Gastrocnemius medialis (tissue), 4 donors: ENCODE measurements at regions of chr1 and their contacts with region 1.

Region 1: GRCh38 chr1:6199298-6200187 is at the start of gene RPL22:
- DNase-seq: peak; percentile 97 to 98
- ATAC-seq: peak; percentile 98 to 100
- H3K4me3 ChIP-seq: peak within 1 kb of the TSS; percentile 78 to 96 (median 91)
- H3K27ac ChIP-seq: peak within 1 kb of the TSS; percentile 82 to 84 (median 83)
- H3K4me1 ChIP-seq: peaks cover 13 to 21% of the 10 kb centered on the region in 2 donors
- H3K27me3 ChIP-seq: no peaks in the 10 kb centered on the region
- CTCF ChIP-seq: peak in 1 of 5 experiments; percentile 12
- POLR2A ChIP-seq: peak; percentile 64 to 69
- total RNA-seq, gene RPL22: 95.2 to 132 (median 121) TPM

Region 2: DNA sequence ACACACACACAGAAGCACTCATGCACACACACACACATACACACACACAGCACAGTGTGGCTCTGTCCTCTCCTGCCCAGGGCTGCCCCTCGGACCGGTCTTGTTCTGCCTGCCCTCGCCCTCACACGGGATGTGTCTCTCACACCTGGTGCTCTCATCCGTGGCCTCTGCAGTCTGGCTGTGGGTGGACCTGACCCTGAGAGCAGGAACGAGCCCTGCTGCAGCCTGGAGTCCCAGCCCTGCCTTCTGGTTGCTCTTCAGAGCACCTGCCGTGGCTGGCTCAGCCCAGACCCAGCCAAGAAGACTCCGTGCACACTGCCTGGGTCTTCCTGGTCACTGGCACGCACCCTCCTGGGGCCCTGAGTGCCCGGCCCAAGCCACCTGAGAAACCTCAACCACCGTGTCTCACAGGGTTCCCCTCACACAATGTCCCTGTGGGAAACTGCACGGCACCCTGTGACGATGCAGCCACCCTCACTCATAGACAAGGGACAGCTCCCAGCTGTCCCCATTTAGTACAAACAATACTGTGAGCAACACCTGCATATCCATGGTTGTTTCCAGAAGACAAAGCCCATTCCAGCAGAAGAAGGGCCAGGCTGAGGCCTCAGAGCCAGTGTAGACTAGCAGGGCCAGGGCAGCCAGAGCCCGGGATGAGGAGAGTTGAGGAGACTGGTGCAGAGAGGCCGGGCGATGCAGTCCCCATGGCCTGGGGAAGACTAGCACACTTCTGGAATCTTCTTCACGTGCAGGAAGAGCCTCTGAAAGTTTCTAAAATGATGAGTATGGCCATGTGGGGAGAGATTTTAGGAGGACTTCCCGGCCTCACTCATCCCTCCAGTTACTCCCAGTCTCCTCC is 441.3 kb before region 1 on chr1:
- in situ Hi-C with region 1: no loop called
- intact Hi-C with region 1: no loop called
- DNase-seq: no peak
- ATAC-seq: no peak
- H3K4me3 ChIP-seq: no peak overlapping the region
- H3K27ac ChIP-seq: no peak overlapping the region
- H3K4me1 ChIP-seq: no peaks in the 10 kb centered on the region
- H3K27me3 ChIP-seq: no peaks in the 10 kb centered on the region
- CTCF ChIP-seq: no peak
- POLR2A ChIP-seq: no peak

Region 3: DNA sequence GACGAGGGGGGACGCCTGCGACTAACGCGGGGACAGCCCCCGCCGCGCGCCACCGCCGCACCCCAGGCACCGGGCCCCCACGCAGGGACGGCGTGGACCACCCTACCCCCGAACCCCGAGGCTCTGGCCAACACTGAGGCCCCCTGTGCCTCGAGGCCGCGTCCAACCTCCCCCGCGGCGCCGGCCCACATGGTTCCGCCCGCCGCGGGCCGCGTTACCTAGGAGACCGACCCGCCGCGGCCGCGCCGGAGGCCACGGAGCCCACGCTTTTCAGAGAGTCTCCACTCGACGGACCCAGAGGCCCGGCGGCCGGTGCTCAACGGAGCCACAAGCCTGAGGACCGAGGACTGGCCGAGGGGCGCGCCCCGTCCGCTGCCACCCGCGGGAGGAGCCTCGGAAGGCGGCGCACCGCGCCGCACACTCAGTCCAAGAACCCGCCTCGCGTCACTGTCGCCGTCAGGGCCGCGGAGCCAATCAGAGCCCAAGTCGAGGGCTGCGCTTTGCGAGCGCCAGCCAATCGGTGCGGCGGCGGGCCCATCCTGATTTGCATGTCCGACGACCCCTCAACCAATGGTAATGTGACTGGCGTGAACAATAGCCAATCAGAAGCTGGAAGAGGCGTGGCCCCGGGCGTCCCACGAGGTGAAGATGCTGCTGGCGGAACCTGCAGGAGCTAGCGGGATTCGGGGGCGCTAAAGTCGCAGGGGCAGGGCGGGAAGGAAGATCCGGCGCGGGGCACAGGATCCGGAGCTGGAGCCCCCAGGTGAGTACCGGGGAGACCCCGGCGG is 207.3 kb before region 1 on chr1 and contains the start of gene NPHP4:
- in situ Hi-C with region 1: no loop called
- intact Hi-C with region 1: loop called (anchors 1 kb)
- DNase-seq: peak; percentile 99
- ATAC-seq: peak; percentile 97 to 98
- H3K4me3 ChIP-seq: peak within 1 kb of the TSS; percentile 68 to 88 (median 72)
- H3K27ac ChIP-seq: peak within 1 kb of the TSS; percentile 71 to 93 (median 80)
- H3K4me1 ChIP-seq: peaks cover 4 to 15% of the 10 kb centered on the region in 2 donors
- H3K27me3 ChIP-seq: peaks cover 0 to 7% (median 5%) of the 10 kb centered on the region in 3 donors
- CTCF ChIP-seq: peak in 2 of 5 experiments; percentile 10 to 21
- POLR2A ChIP-seq: peak; percentile 54 to 66
- total RNA-seq, gene NPHP4: 1.1 to 10.4 (median 1.8) TPM

Region 4: DNA sequence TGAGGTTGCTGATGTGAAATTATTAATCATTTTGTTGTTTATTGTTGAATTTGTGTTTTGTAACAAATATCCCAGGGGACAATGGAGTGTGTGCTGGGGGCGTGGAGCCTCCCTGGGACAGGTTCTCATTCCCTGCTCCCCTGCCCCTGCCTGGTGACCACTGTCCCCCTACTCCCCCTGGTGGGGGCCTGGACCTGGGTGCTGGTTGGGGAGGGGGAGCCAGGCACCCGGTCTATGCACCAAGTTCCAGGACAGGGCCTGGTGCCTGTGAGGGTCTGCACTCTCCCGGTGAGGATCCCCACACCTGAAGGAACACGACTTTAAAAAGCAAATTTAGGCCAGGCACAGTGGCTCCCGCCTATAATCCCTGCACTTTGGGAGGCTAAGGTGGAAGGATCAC is 61.8 kb before region 1 on chr1:
- in situ Hi-C with region 1: no loop called
- intact Hi-C with region 1: no loop called
- DNase-seq: no peak
- ATAC-seq: no peak
- H3K4me3 ChIP-seq: no peak overlapping the region
- H3K27ac ChIP-seq: no peak overlapping the region
- H3K4me1 ChIP-seq: no peaks in the 10 kb centered on the region
- H3K27me3 ChIP-seq: no peaks in the 10 kb centered on the region
- CTCF ChIP-seq: no peak
- POLR2A ChIP-seq: no peak

Region 5: GRCh38 chr1:6235296-6235677 is 35.7 kb after region 1 on chr1:
- in situ Hi-C with region 1: no loop called
- intact Hi-C with region 1: loop called (anchors 2 kb)
- DNase-seq: no peak
- ATAC-seq: peak in 1 of 2 donors; percentile 15
- H3K4me3 ChIP-seq: peak overlapping the region; percentile 58 to 64 (median 64)
- H3K27ac ChIP-seq: peak overlapping the region; percentile 67 to 81 (median 74)
- H3K4me1 ChIP-seq: peaks cover 12% of the 10 kb centered on the region in 2 donors
- H3K27me3 ChIP-seq: peaks cover under 1 to 9% (median 6%) of the 10 kb centered on the region in 3 donors
- CTCF ChIP-seq: no peak
- POLR2A ChIP-seq: no peak

Region 6: DNA sequence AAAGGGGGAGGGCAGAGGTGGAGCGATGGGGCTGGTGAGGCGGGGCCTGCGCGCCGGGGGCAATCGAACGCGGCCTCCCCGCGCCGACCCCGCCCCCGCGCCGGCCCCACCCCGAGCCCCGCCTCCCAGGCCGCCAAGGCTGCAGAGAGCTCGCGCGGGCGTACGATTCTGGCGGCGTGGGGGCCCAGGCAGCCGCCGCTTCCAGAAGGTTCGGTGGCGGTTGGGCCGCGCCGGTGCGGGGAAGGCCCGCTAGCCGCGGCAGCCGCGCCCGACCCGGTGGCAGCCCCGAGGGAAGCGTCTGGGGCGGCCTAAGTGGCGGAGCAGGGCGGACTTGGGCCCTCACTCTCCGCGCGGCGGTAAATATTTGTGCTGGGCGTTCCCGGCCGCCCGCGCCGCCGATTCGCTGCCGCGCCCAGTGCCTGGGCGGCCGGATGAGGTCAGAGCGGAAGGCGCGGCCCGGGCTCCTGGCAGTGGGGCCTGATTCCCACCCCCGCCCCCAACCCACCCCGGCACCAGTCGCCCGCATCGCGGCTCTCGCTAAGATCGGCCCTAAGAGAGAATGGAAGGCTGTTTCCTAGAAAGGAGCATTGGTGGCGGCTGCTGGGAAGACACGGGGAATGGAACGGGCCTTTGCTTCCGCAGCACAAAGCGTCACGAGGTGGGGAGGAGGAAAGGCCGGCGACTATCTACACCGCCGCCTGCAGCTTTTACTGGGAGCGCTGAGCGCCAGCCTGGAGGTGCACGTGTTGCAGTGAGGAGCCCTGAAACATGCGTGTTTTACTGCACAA is 194.1 kb after region 1 on chr1 and contains the start of gene ACOT7:
- in situ Hi-C with region 1: no loop called
- intact Hi-C with region 1: loop called (anchors 1 kb)
- DNase-seq: peak; percentile 71 to 77
- ATAC-seq: peak; percentile 97
- H3K4me3 ChIP-seq: peak within 1 kb of the TSS; percentile 61 to 82 (median 66)
- H3K27ac ChIP-seq: peak within 1 kb of the TSS; percentile 87 to 98 (median 94)
- H3K4me1 ChIP-seq: peaks cover 7 to 8% of the 10 kb centered on the region in 2 donors
- H3K27me3 ChIP-seq: no peaks in the 10 kb centered on the region
- CTCF ChIP-seq: peak in 1 of 5 experiments; percentile 26
- POLR2A ChIP-seq: peak; percentile 60 to 78
- total RNA-seq, gene ACOT7: 1.3 to 5.8 (median 3.2) TPM